ENCODE measurements at regions of chr19 and their contacts with region 1.

Region 1: GRCh38 chr19:45200568-45200994 is 22.0 kb downstream of the BLOC1S3 start:
- DNase-seq: no peak

Region 2: DNA sequence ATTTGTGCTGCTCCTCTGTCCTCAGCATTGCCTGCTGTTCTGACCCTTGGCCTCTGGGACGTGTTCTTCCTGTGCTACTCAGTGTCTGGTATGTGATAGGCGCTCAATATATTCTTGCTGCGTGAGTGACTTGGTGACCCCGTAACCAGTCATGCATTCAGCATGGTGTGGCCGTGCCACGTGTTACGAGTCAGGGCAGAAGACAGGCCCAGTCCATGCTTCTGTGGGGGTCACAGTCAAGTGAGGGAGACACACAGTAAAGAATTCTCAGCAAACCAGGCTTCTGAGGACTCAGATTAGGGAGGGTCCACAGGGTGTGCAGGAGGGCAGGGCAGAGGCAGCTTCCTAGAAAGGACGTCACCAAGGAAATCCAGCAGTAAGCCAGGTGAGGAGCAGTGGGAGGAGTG is 99.7 kb before region 1 on chr19:
- CTCF ChIA-PET with region 1: interaction called, 10 read pairs
- POLR2A ChIA-PET with region 1: no interaction called
- DNase-seq: no peak

Region 3: GRCh38 chr19:45178262-45179071 is 22.1 kb before region 1 on chr19 and contains the start of gene BLOC1S3:
- CTCF ChIA-PET with region 1: no interaction called
- POLR2A ChIA-PET with region 1: no interaction called
- DNase-seq: peak; percentile 97

Region 4: GRCh38 chr19:45234089-45234869 is 33.7 kb after region 1 on chr19:
- CTCF ChIA-PET with region 1: no interaction called
- POLR2A ChIA-PET with region 1: no interaction called
- DNase-seq: no peak

Measured in HEK293T (cell line).